B cell (primary cell): ENCODE measurements at regions of chr1 and their contacts with region 1.

Region 1: GRCh38 chr1:156608036-156608674 is 6.9 kb upstream of the GPATCH4 start:
- DNase-seq: peak; percentile 86
- ATAC-seq: peak; percentile 81
- H3K4me3 ChIP-seq: no peak overlapping the region
- H3K4me3 Mint-ChIP-seq: peak overlapping the region; percentile 71
- H3K27ac ChIP-seq: no peak overlapping the region
- H3K27ac Mint-ChIP-seq: peak overlapping the region; percentile 81
- H3K4me1 ChIP-seq: peaks cover 22 to 28% of the 10 kb centered on the region in 2 donors
- H3K4me1 Mint-ChIP-seq: peaks cover 26% of the 10 kb centered on the region
- H3K27me3 ChIP-seq: peaks cover 0 to 10% (median 3%) of the 10 kb centered on the region in 4 experiments
- H3K27me3 Mint-ChIP-seq: peaks cover 10% of the 10 kb centered on the region
- CTCF ChIP-seq: peak; percentile 80

Region 2: DNA sequence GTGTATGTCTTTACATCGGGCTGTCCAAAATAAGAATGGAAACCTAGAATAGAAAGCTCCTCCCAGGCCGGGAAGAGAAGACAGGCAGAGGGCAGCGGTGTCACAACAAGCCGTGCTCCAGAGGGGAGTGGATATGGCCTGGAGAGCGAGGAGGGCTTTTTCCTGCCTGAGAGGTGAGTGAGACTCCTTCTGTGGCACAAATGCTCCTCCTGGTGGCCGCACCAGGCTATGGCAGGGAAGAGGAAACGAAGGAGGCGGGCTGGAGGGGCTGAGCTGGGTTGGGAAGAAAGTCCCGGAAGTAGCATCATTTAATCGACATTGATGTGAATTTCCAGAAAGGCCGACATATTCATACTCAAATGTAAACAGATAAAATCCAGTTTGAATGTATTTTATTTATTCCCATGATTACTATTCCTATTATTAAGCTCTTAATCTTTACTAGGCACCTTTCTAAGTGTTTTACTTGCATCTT is 162.3 kb before region 1 on chr1:
- CTCF ChIA-PET with region 1: interaction called, 33 read pairs
- POLR2A ChIA-PET with region 1: no interaction called
- intact Hi-C with region 1: loop called (anchors 2 kb)
- DNase-seq: peak; percentile 83
- ATAC-seq: peak; percentile 97
- H3K4me3 ChIP-seq: no peak overlapping the region
- H3K4me3 Mint-ChIP-seq: no peak overlapping the region
- H3K27ac ChIP-seq: no peak overlapping the region
- H3K27ac Mint-ChIP-seq: no peak overlapping the region
- H3K4me1 ChIP-seq: peaks cover 4 to 10% of the 10 kb centered on the region in 2 donors
- H3K4me1 Mint-ChIP-seq: no peaks in the 10 kb centered on the region
- H3K27me3 ChIP-seq: peaks cover 0 to 64% (median 41%) of the 10 kb centered on the region in 4 experiments
- H3K27me3 Mint-ChIP-seq: peaks cover 61% of the 10 kb centered on the region
- CTCF ChIP-seq: peak; percentile 92

Region 3: DNA sequence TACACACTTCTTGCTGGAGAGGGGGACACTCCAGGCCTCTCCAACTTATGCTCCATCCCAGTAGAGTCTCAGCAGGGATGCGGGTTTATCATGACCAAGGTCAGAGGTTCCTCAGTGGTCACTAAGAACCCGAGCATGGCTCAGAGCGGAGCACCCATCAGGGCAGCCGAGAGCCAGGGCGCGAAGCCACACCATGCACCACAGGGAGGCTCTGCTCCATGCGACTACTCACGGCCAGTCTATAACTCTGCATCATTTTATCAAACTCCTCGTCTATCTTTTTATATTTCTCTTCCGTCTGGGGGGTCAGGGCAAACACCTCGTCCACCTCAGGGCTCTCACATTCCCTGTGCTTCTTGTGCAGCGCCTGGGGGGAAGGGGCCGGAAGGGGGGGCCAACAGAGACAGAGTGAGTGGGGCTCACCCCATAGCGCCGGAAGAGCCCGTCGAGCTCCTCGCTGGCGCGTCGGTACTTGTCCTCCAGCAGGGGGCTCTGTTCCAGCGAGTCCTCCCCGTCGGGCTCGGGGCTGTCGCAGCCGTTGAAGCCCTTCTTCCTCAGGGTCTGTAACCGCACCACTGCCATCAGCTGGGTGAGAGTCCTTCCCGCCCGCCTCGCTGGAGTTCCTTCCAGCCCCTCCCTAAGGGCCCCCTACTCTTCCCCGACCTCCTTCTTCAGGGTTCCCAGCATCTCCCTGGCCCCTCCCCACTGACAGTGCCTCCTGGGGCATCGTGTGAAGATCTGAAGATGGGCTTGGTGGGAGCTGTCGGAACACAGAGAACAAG is 127.6 kb before region 1 on chr1:
- CTCF ChIA-PET with region 1: interaction called, 66 read pairs
- POLR2A ChIA-PET with region 1: interaction called, 5 read pairs
- intact Hi-C with region 1: loop called (anchors 1 kb)
- DNase-seq: peak; percentile 85
- ATAC-seq: peak; percentile 84
- H3K4me3 ChIP-seq: no peak overlapping the region
- H3K4me3 Mint-ChIP-seq: peak overlapping the region; percentile 70
- H3K27ac ChIP-seq: peak overlapping the region; percentile 60 to 72
- H3K27ac Mint-ChIP-seq: peak overlapping the region; percentile 93
- H3K4me1 ChIP-seq: peaks cover 16 to 41% of the 10 kb centered on the region in 2 donors
- H3K4me1 Mint-ChIP-seq: peaks cover 54% of the 10 kb centered on the region
- H3K27me3 ChIP-seq: no peaks in the 10 kb centered on the region
- H3K27me3 Mint-ChIP-seq: no peaks in the 10 kb centered on the region
- CTCF ChIP-seq: peak; percentile 81

Region 4: GRCh38 chr1:156571949-156572662 is 36.0 kb before region 1 on chr1 and contains the start of gene IQGAP3:
- CTCF ChIA-PET with region 1: interaction called, 9 read pairs
- POLR2A ChIA-PET with region 1: no interaction called
- intact Hi-C with region 1: loop called (anchors 5 kb)
- DNase-seq: peak; percentile 88
- ATAC-seq: peak; percentile 96
- H3K4me3 ChIP-seq: peak within 1 kb of the TSS; percentile 6 to 45 (median 27)
- H3K4me3 Mint-ChIP-seq: peak within 1 kb of the TSS; percentile 85
- H3K27ac ChIP-seq: no peak within 1 kb of the TSS
- H3K27ac Mint-ChIP-seq: peak within 1 kb of the TSS; percentile 12
- H3K4me1 ChIP-seq: peaks cover 13 to 14% of the 10 kb centered on the region in 2 donors
- H3K4me1 Mint-ChIP-seq: peaks cover 13% of the 10 kb centered on the region
- H3K27me3 ChIP-seq: peaks cover 0 to 32% (median 14%) of the 10 kb centered on the region in 4 experiments
- H3K27me3 Mint-ChIP-seq: peaks cover 23% of the 10 kb centered on the region
- CTCF ChIP-seq: no peak
- total RNA-seq, gene IQGAP3: 0.07 TPM in 2 replicates

Region 5: GRCh38 chr1:156591432-156592157 is 16.6 kb before region 1 on chr1 and contains the start of gene NAXE:
- CTCF ChIA-PET with region 1: interaction called, 80 read pairs
- POLR2A ChIA-PET with region 1: interaction called, 8 read pairs
- intact Hi-C with region 1: no loop called
- DNase-seq: peak; percentile 86
- ATAC-seq: peak; percentile 96
- H3K4me3 ChIP-seq: peak within 1 kb of the TSS; percentile 54 to 77 (median 69)
- H3K4me3 Mint-ChIP-seq: peak within 1 kb of the TSS; percentile 93
- H3K27ac ChIP-seq: peak within 1 kb of the TSS; percentile 80 to 88
- H3K27ac Mint-ChIP-seq: peak within 1 kb of the TSS; percentile 96
- H3K4me1 ChIP-seq: peaks cover 18 to 22% of the 10 kb centered on the region in 2 donors
- H3K4me1 Mint-ChIP-seq: peaks cover 25% of the 10 kb centered on the region
- H3K27me3 ChIP-seq: no peaks in the 10 kb centered on the region
- H3K27me3 Mint-ChIP-seq: no peaks in the 10 kb centered on the region
- CTCF ChIP-seq: no peak
- total RNA-seq, gene NAXE: 56.9 and 59.7 TPM in 2 replicates

Region 6: DNA sequence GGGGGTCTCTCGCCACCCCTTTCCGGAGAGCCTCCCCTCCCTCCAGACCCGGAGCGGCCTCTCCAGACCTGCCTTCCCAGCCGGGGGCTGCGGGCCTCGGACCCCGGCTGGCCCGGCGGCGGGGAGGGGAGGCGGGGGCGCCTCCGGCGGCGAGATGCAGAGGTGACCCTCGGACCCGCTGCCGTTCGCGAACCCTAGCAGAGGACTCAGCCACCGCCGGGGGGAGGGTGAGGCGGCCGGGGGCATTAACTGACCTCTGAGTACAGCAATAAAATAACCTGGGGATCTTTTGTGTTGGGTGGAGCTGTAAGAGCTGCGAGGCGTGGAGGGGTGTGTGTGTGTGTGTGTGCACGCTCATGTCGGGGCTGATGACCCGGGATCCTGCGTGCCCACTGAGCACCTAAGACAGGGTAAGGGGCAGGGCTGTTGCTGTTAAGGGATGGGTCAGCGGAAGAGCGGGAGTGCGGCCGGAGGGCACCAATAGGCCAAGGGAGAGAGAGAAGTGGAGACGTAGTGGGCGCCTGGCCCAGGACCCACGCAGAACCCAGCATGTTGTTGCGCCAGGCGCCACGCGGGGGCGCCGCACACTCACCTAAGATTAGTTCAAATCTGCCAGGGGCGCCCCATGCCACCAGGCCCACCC is 17.4 kb after region 1 on chr1:
- CTCF ChIA-PET with region 1: interaction called, 12 read pairs
- POLR2A ChIA-PET with region 1: no interaction called
- intact Hi-C with region 1: no loop called
- DNase-seq: peak; percentile 86
- ATAC-seq: peak; percentile 75
- H3K4me3 ChIP-seq: peak overlapping the region in 4 of 5 experiments; percentile 19 to 50 (median 47)
- H3K4me3 Mint-ChIP-seq: peak overlapping the region; percentile 84
- H3K27ac ChIP-seq: no peak overlapping the region
- H3K27ac Mint-ChIP-seq: peak overlapping the region; percentile 2
- H3K4me1 ChIP-seq: peaks cover 22 to 26% of the 10 kb centered on the region in 2 donors
- H3K4me1 Mint-ChIP-seq: peaks cover 15% of the 10 kb centered on the region
- H3K27me3 ChIP-seq: peaks cover 2 to 66% (median 27%) of the 10 kb centered on the region in 4 experiments
- H3K27me3 Mint-ChIP-seq: peaks cover 49% of the 10 kb centered on the region
- CTCF ChIP-seq: peak; percentile 91

Region 7: GRCh38 chr1:156866249-156866909 is 258.2 kb after region 1 on chr1:
- CTCF ChIA-PET with region 1: no interaction called
- POLR2A ChIA-PET with region 1: no interaction called
- intact Hi-C with region 1: no loop called
- DNase-seq: no peak
- ATAC-seq: no peak
- H3K4me3 ChIP-seq: no peak overlapping the region
- H3K4me3 Mint-ChIP-seq: no peak overlapping the region
- H3K27ac ChIP-seq: no peak overlapping the region
- H3K27ac Mint-ChIP-seq: no peak overlapping the region
- H3K4me1 ChIP-seq: peaks cover 1 to 8% of the 10 kb centered on the region in 2 donors
- H3K4me1 Mint-ChIP-seq: peaks cover 3% of the 10 kb centered on the region
- H3K27me3 ChIP-seq: peaks cover 0 to 53% (median 23%) of the 10 kb centered on the region in 4 experiments
- H3K27me3 Mint-ChIP-seq: peaks cover 50% of the 10 kb centered on the region
- CTCF ChIP-seq: no peak